ENCODE measurements at regions of chr12 and their contacts with region 1.

Region 1: GRCh38 chr12:26891704-26892103 is 46.1 kb downstream of the INTS13 start:
- DNase-seq: no peak
- ATAC-seq: no peak
- H3K4me3 ChIP-seq: no peak overlapping the region
- H3K27ac ChIP-seq: no peak overlapping the region
- H3K4me1 ChIP-seq: no peaks in the 10 kb centered on the region
- H3K27me3 ChIP-seq: no peaks in the 10 kb centered on the region
- CTCF ChIP-seq: no peak
- POLR2A ChIP-seq: no peak

Region 2: DNA sequence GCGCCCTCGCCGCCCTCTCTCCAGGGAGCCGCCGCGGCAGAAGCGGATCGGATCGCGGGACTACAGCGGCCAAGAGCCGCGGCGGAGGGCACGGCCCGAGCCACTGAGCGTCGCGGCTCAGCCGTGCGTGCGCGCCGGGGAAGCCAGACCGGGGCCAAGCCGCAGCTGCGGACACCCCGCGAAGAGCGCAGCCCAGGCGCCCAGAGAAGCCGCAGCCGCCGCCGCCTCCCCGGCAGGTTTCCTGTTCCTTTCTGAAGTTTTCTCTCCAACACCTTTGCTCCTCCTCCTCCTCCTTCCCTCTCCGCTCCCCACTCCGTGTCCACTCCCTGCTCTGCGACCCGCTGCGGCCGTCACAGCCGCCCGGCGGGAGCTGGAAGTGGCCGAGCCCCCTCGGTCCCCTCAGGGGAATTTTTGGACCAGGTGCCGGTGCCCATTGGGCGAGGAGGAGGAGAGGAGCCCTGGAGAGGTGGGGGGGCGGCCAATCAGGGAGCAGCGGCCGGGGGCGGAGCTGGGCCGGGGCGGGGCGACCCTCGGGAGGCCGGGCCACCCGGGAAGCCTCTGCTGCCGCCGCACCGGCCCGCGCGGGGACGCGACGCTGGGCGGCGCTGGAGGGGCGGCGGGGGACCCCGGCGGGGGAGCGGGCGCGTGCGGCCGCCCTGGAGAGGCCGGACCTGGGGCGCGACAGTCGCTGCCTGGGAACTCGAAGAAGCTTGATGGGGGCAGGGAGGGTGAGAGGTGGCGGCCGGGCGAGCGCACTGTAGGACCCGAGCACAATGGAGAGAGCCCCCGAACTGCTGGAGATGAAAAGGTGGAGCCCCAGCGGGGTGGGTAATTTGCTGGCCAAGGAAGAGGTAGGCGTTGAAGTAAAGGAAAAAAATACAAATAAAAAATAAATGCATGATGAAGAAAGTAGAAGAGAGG is 58.6 kb before region 1 on chr12 and contains the start of gene ITPR2:
- intact Hi-C with region 1: loop called (anchors 10 kb)
- DNase-seq: peak; percentile 95 to 98 (median 96)
- ATAC-seq: peak; percentile 95
- H3K4me3 ChIP-seq: peak within 1 kb of the TSS; percentile 50 to 91
- H3K27ac ChIP-seq: peak within 1 kb of the TSS; percentile 90 to 98 (median 95)
- H3K4me1 ChIP-seq: peaks cover 26% of the 10 kb centered on the region
- H3K27me3 ChIP-seq: no peaks in the 10 kb centered on the region
- CTCF ChIP-seq: peak in 5 of 7 experiments; percentile 21 to 56 (median 54)
- POLR2A ChIP-seq: peak; percentile 88 to 97 (median 96)
- total RNA-seq, gene ITPR2: 37.4 to 92.9 TPM

Region 3: DNA sequence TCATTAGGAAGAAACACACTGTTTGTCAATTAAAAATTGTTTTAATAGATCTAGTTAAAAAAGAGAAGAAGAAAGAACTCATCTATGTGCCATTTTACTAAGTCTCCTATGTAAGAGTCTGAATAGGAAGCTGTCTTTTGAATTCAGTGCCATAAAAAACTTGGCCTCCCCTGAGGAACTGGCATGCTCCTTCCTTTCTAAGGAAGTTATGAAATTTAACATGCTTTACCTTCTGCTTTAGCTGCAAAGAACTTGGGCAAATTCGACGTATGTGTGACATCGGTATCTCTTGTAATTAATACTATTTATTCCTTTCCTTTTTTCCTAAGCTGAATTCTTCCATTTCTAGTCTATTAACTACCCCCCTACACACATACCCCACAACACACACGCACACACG is 110.0 kb after region 1 on chr12:
- intact Hi-C with region 1: no loop called
- DNase-seq: no peak
- ATAC-seq: no peak
- H3K4me3 ChIP-seq: no peak overlapping the region
- H3K27ac ChIP-seq: no peak overlapping the region
- H3K4me1 ChIP-seq: peaks cover 32% of the 10 kb centered on the region
- H3K27me3 ChIP-seq: no peaks in the 10 kb centered on the region
- CTCF ChIP-seq: no peak
- POLR2A ChIP-seq: no peak